Heart left ventricle (tissue), 16 donors: ENCODE measurements at regions of chr1 and their contacts with region 1.

Region 1: GRCh38 chr1:234610348-234611152 is 572 bp upstream of the IRF2BP2 start:
- DNase-seq: peak; percentile 97 to 98 (median 97)
- ATAC-seq: peak; percentile 42 to 85 (median 72)
- H3K4me3 ChIP-seq: peak overlapping the region; percentile 32 to 93 (median 62)
- H3K27ac ChIP-seq: peak overlapping the region; percentile 94 to 100 (median 99)
- H3K4me1 ChIP-seq: peaks cover 9 to 43% (median 32%) of the 10 kb centered on the region in 12 donors
- H3K27me3 ChIP-seq: no peaks in the 10 kb centered on the region
- CTCF ChIP-seq: peak in 1 of 12 donors; percentile 7
- POLR2A ChIP-seq: peak; percentile 61 to 99

Region 2: DNA sequence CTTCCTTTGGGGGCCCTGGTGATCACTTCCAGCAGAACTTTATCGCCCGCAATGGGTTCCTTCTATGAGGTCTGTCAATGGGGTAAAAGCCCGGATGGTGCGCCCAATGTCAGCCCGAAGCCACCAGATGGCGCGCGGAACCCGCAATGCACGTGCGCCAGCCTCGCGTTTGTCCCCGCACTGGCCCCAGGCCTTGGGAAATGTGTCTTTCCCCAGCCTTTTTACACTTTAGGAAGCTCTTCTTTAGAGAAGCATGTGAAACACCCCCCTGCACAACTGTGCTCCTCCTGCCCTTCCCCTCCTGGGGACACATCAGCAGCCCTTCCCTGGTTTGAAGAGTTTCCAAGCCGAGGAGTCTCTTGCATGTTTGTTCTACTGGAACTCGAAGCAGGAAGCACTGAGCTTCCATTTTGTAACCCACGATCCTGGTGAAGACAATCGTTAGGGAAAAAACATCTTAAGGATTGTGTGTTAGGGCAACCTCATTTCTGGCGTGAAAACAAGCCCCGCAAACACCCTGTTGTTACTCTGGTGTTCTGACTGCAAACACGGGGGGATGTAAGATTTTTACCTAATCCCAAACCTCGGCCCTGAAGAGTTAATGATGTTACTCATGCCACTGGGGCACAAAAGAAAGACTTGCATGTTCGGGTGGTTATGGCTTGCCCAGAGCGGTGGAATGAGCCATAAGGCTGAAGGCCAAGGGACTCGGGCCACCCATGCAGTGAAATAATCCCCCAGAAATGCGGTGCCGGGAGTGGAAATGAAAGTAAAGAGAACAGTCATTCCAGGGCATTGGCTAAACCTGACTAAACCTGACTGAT is 111.2 kb before region 1 on chr1:
- intact Hi-C with region 1: loop called in 4 of 10 experiments (anchors 1 to 2 kb)
- DNase-seq: peak; percentile 89 to 95 (median 91)
- ATAC-seq: peak; percentile 93 to 98 (median 96)
- H3K4me3 ChIP-seq: peak overlapping the region in 7 of 12 donors; percentile 4 to 22 (median 9)
- H3K27ac ChIP-seq: peak overlapping the region; percentile 51 to 94 (median 86)
- H3K4me1 ChIP-seq: peaks cover 0 to 43% (median 22%) of the 10 kb centered on the region in 12 donors
- H3K27me3 ChIP-seq: no peaks in the 10 kb centered on the region
- CTCF ChIP-seq: peak; percentile 90 to 98 (median 96)
- POLR2A ChIP-seq: peak in 1 of 2 donors; percentile 20

Region 3: DNA sequence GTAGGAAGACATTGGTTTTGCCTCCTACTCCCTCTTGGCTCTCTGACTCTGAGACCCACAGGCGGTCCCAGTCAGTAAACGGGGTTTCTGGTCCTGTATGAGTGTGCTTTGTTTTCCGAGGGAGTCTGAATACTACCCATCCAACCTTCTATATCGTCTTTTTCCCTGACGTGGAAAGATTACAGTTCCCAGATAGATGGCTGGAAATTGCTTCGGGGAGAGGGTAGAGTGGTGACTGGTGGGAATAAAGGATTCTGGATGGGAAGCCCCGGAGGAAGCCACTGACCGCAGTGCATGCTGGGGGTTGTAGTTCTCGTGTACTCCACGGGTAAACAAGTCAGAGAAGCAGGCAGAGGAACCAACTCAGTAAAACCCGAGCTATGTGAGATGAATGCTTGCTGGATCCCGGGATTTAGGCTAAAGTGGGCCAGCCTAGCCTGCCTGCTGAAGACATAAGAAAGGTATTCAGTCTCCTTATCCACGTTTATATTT is 65.6 kb after region 1 on chr1:
- intact Hi-C with region 1: loop called in 1 of 10 experiments (anchors 5 kb)
- DNase-seq: peak; percentile 86 to 92 (median 89)
- ATAC-seq: peak; percentile 94 to 99 (median 98)
- H3K4me3 ChIP-seq: peak overlapping the region in 11 of 12 donors; percentile 13 to 61 (median 47)
- H3K27ac ChIP-seq: peak overlapping the region; percentile 26 to 78 (median 66)
- H3K4me1 ChIP-seq: peaks cover 0 to 15% (median 5%) of the 10 kb centered on the region in 12 donors
- H3K27me3 ChIP-seq: no peaks in the 10 kb centered on the region
- CTCF ChIP-seq: no peak
- POLR2A ChIP-seq: peak in 1 of 2 donors; percentile 24

Region 4: GRCh38 chr1:234687011-234687410 is 76.5 kb after region 1 on chr1:
- intact Hi-C with region 1: no loop called
- DNase-seq: no peak
- ATAC-seq: no peak
- H3K4me3 ChIP-seq: no peak overlapping the region
- H3K27ac ChIP-seq: no peak overlapping the region
- H3K4me1 ChIP-seq: peaks cover 0 to 20% (median 11%) of the 10 kb centered on the region in 12 donors
- H3K27me3 ChIP-seq: no peaks in the 10 kb centered on the region
- CTCF ChIP-seq: no peak
- POLR2A ChIP-seq: no peak

Region 5: DNA sequence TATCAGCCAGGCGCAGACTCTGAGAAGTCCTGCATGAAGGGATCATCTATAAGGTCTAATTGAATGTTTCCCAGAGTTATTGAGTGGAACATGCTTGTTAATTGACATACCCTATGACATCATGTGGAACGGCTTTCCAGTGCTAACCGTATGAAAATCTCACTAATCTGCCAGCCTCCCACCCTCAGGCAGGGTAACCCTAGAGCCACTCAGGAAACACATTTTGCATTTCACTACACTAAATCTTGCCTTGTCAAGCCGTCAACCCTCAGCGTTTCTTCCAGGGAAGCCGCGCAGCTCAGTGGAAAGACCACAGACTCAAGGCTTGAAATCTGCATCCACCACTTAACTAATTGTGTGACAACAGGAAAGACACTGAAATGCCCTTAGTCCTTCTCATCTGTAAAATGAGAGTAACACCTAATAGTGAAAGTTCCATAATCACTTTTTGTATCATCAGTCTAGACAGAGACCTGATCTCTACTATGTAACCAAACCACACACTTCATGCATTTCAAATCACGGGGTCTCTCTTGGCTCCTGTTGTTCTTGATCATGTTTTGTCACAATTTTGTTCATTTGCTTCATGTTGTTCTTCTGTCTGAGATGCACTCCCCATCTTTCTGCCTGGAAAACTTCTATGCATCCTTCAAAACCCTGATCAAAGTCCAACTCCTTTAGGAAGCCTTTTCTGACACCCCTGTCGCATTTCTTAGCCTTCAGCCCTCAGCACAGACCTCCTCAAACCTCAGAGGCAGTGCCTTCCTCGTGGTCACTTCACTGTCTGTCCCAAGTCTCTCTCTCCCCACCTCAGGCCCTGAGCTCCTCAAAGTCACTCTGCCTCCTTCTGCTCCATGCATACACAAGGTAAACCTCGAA is 271.6 kb after region 1 on chr1:
- intact Hi-C with region 1: loop called in 8 of 10 experiments (anchors 1 to 10 kb)
- DNase-seq: no peak
- ATAC-seq: no peak
- H3K4me3 ChIP-seq: no peak overlapping the region
- H3K27ac ChIP-seq: no peak overlapping the region
- H3K4me1 ChIP-seq: peaks cover 0 to 50% (median 27%) of the 10 kb centered on the region in 12 donors
- H3K27me3 ChIP-seq: no peaks in the 10 kb centered on the region
- CTCF ChIP-seq: no peak
- POLR2A ChIP-seq: no peak

Region 6: DNA sequence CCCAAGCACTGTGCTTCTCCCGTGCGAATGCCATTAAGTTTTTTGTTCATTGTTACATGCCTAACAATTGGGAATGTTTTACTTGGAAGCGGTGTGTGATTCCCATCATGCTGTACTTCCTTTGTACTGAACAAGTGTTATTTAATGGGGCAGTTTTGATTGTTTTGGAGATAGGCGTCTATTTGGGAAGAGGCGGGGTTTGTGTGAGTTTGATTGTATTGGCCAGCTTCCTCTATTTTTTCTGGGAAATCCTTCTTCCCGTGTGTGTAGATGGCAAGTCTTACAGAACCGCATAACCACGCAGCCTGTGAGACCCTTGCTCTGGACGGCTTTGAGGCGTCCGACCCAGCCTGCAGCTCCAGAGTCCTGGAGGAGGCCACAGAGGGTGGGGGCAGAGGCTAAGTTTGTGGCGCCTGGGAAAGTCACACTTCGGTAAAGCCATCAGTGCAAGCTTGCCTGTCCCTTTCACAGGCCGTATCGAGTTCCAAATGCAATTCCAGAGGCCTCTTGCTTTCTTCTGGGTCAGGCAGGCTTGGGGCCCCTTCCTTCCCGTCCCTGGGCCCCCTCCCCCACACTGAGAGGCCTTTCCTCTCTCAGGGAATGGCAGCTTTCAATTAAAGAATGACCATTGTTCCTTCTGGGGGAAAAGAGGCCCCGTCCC is 307.8 kb after region 1 on chr1:
- intact Hi-C with region 1: loop called in 6 of 10 experiments (anchors 1 to 10 kb)
- DNase-seq: peak in 4 of 5 donors; percentile 55 to 72 (median 69)
- ATAC-seq: peak; percentile 30 to 68 (median 47)
- H3K4me3 ChIP-seq: no peak overlapping the region
- H3K27ac ChIP-seq: peak overlapping the region; percentile 81 to 93 (median 87)
- H3K4me1 ChIP-seq: peaks cover 21 to 82% (median 71%) of the 10 kb centered on the region in 12 donors
- H3K27me3 ChIP-seq: no peaks in the 10 kb centered on the region
- CTCF ChIP-seq: no peak
- POLR2A ChIP-seq: no peak

Region 7: GRCh38 chr1:234997201-234997895 is 386.8 kb after region 1 on chr1:
- intact Hi-C with region 1: loop called in 4 of 10 experiments (anchors 2 to 10 kb)
- DNase-seq: peak; percentile 95 to 100 (median 98)
- ATAC-seq: peak; percentile 94 to 96 (median 96)
- H3K4me3 ChIP-seq: peak overlapping the region in 7 of 12 donors; percentile 6 to 28 (median 18)
- H3K27ac ChIP-seq: peak overlapping the region; percentile 88 to 98 (median 93)
- H3K4me1 ChIP-seq: peaks cover 8 to 32% (median 26%) of the 10 kb centered on the region in 12 donors
- H3K27me3 ChIP-seq: no peaks in the 10 kb centered on the region
- CTCF ChIP-seq: peak in 1 of 12 donors; percentile 18
- POLR2A ChIP-seq: peak in 1 of 2 donors; percentile 62